OCI-LY7 (cell line): ENCODE measurements at regions of chr6 and their contacts with region 1.

Region 1: GRCh38 chr6:134640975-134641429 is 308.9 kb downstream of the ALDH8A1 start:
- DNase-seq: peak; percentile 81
- H3K4me3 ChIP-seq: no peak overlapping the region
- H3K27ac ChIP-seq: no peak overlapping the region
- H3K4me1 ChIP-seq: peaks cover 21% of the 10 kb centered on the region
- CTCF ChIP-seq: peak; percentile 95

Region 2: DNA sequence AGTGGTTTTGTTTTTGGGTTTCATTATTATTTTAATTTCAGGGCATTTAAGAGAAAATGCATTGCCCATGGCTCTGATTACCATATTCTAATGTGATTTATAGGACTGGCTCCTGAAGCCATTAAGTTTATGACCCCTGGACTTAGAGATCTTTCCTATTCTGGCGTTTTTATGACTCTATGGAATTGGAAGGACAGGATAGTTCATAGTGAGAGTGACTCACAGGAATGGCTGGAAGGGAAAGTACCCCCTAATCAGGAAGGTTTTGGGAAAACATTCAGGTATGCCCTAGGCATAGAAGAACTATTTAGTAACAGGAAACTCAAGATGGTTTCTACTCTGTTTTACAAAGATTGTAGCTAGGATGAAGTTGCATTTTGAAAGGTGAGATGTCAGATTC is 480.0 kb before region 1 on chr6:
- CTCF ChIA-PET with region 1: interaction called, 3 read pairs
- POLR2A ChIA-PET with region 1: no interaction called
- intact Hi-C with region 1: loop called (anchors 1 kb)
- DNase-seq: no peak
- H3K4me3 ChIP-seq: no peak overlapping the region
- H3K27ac ChIP-seq: no peak overlapping the region
- H3K4me1 ChIP-seq: no peaks in the 10 kb centered on the region
- CTCF ChIP-seq: no peak

Region 3: DNA sequence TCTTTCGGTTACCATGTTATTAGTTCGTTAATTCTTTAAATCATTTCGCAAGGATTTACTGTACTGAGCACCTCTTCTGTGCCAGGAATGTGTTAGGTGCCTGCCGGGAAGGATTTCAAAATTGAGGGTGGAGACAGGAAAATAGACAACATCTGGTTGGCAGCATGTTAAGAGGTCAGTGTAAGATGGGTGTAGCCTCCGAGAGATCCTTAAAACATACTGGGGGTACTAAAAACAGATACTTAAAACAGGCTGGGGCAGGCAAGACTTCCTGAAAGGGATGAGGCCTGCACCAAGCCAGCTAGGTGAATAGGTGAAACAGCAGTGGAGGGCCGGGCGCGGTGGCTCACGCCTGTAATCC is 145.1 kb before region 1 on chr6:
- CTCF ChIA-PET with region 1: no interaction called
- POLR2A ChIA-PET with region 1: no interaction called
- intact Hi-C with region 1: no loop called
- DNase-seq: no peak
- H3K4me3 ChIP-seq: no peak overlapping the region
- H3K27ac ChIP-seq: no peak overlapping the region
- H3K4me1 ChIP-seq: no peaks in the 10 kb centered on the region
- CTCF ChIP-seq: no peak

Region 4: GRCh38 chr6:134539865-134540323 is 101.1 kb before region 1 on chr6:
- CTCF ChIA-PET with region 1: no interaction called
- POLR2A ChIA-PET with region 1: no interaction called
- intact Hi-C with region 1: no loop called
- DNase-seq: no peak
- H3K4me3 ChIP-seq: no peak overlapping the region
- H3K27ac ChIP-seq: no peak overlapping the region
- H3K4me1 ChIP-seq: no peaks in the 10 kb centered on the region
- CTCF ChIP-seq: no peak

Region 5: GRCh38 chr6:134551245-134551960 is 89.6 kb before region 1 on chr6:
- CTCF ChIA-PET with region 1: no interaction called
- POLR2A ChIA-PET with region 1: no interaction called
- intact Hi-C with region 1: no loop called
- DNase-seq: no peak
- H3K4me3 ChIP-seq: no peak overlapping the region
- H3K27ac ChIP-seq: no peak overlapping the region
- H3K4me1 ChIP-seq: no peaks in the 10 kb centered on the region
- CTCF ChIP-seq: no peak

Region 6: DNA sequence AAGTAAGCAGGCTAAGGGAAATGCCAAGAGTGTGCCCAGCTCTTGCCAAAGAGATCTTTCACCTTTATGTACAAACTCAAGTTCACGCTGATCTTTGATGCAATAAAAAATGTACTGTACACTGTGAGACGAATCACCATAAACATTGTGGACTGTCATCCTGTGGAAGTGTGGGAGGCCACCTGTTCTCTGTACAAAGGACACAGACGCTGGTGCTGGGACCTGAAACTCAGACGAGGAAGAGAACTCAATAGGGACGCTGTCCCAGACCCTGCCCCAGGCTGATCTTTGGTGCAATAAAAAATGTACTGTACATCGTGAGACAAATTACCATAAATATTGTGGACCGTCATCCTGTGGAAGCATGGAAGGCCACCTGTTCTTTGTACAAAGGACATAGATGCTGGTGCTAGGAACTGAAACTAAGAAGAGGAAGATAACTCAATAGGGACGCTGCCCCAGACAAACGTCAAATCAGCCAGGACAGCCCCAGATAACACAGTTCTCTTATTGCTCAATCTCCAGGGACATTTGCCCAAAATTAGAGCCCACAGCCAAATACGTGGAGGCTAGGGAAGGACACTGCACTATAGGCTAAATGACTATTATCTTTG is 10.4 kb before region 1 on chr6:
- CTCF ChIA-PET with region 1: interaction called, 5 read pairs
- POLR2A ChIA-PET with region 1: interaction called, 11 read pairs
- intact Hi-C with region 1: no loop called
- DNase-seq: peak; percentile 79
- H3K4me3 ChIP-seq: peak overlapping the region; percentile 42
- H3K27ac ChIP-seq: peak overlapping the region; percentile 38
- H3K4me1 ChIP-seq: peaks cover 37% of the 10 kb centered on the region
- CTCF ChIP-seq: no peak

Region 7: DNA sequence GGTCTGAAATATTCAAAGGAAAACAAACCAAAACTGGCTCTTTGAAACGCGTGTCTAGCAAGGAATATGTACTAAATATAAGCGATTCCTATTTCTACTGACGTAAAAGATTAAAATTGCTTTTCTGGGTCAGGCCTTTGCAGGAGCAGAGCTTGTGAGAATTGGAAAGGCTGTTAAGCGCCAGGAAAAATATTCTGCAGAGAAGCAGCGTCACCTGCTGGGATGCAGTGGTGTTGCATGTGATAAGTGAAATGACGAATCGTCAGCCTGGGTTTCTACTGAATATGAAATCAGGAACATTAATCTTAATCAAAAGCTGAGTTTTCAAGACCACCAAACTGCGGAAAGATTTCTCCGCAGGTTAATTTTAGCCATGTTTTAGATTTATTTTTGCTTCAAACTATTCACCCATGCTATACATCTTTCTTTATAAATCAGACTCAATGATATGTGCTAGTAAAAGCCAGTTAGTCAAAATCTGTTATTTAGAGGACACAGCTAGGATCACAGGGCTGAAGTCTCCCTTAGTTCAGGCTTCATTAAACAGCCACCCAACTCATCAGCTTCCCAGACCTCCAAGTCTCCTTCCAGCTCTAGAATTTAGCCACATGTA is 241.5 kb after region 1 on chr6:
- CTCF ChIA-PET with region 1: interaction called, 3 read pairs
- POLR2A ChIA-PET with region 1: no interaction called
- intact Hi-C with region 1: loop called (anchors 1 kb)
- DNase-seq: peak; percentile 65
- H3K4me3 ChIP-seq: no peak overlapping the region
- H3K27ac ChIP-seq: no peak overlapping the region
- H3K4me1 ChIP-seq: peaks cover 6% of the 10 kb centered on the region
- CTCF ChIP-seq: peak; percentile 94

Region 8: GRCh38 chr6:134938896-134939295 is 297.9 kb after region 1 on chr6:
- CTCF ChIA-PET with region 1: no interaction called
- POLR2A ChIA-PET with region 1: interaction called, 3 read pairs
- intact Hi-C with region 1: loop called (anchors 5 kb)
- DNase-seq: peak; percentile 24
- H3K4me3 ChIP-seq: no peak overlapping the region
- H3K27ac ChIP-seq: no peak overlapping the region
- H3K4me1 ChIP-seq: no peaks in the 10 kb centered on the region
- CTCF ChIP-seq: no peak